Dendritic cell treated with granulocyte-macrophage colony-stimulating factor and Interleukin-4, amounts not matched to agents 40 ng/mL and 50 ng/mL, for 4 days (primary cell): ENCODE measurements at regions of chr6 and their contacts with region 1.

Region 1: GRCh38 chr6:14210663-14211561 is 93.3 kb downstream of the CD83 start:
- H3K4me3 Mint-ChIP-seq: peak overlapping the region; percentile 77
- H3K27ac Mint-ChIP-seq: peak overlapping the region; percentile 81
- H3K4me1 Mint-ChIP-seq: peaks cover 38% of the 10 kb centered on the region
- H3K27me3 Mint-ChIP-seq: peaks cover 15% of the 10 kb centered on the region

Region 2: DNA sequence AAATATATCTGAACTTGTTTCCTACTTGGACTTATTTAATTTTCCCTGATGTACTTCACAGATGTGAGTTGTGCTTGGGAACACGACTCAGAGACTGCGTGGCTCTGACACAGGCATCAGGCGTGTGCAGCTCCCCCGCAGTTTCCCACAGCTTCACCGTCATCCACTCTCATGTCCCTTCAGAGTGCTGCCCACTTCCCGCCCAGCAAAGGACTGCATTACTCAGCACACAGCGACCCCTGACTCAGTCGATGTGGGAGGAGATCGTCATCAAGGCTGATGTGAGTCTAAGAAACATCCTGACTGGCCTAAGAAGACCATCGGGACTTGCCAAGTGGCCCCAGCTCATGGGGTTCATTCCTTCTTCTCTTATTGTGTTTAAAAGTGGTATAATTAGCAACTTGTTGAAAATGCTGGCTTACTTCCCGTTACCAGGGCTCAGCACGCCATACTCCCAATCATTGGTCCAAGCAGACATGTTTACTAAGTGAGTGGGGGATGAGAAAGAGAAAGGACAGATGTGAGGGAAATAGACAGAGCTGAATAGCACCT is 495.5 kb after region 1 on chr6:
- intact Hi-C with region 1: loop called (anchors 5 kb)
- H3K4me3 Mint-ChIP-seq: no peak overlapping the region
- H3K27ac Mint-ChIP-seq: no peak overlapping the region
- H3K4me1 Mint-ChIP-seq: peaks cover 69% of the 10 kb centered on the region
- H3K27me3 Mint-ChIP-seq: no peaks in the 10 kb centered on the region

Region 3: GRCh38 chr6:14936861-14937260 is 725.9 kb after region 1 on chr6:
- intact Hi-C with region 1: loop called (anchors 5 kb)
- H3K4me3 Mint-ChIP-seq: no peak overlapping the region
- H3K27ac Mint-ChIP-seq: no peak overlapping the region
- H3K4me1 Mint-ChIP-seq: peaks cover 44% of the 10 kb centered on the region
- H3K27me3 Mint-ChIP-seq: peaks cover 3% of the 10 kb centered on the region

Region 4: GRCh38 chr6:15245361-15246216 is 1034.7 kb after region 1 on chr6 and contains the start of gene JARID2:
- intact Hi-C with region 1: loop called (anchors 5 kb)
- H3K4me3 Mint-ChIP-seq: peak within 1 kb of the TSS; percentile 85
- H3K27ac Mint-ChIP-seq: peak within 1 kb of the TSS; percentile 92
- H3K4me1 Mint-ChIP-seq: peaks cover 26% of the 10 kb centered on the region
- H3K27me3 Mint-ChIP-seq: no peaks in the 10 kb centered on the region

Region 5: GRCh38 chr6:15628499-15629131 is 1417.7 kb after region 1 on chr6:
- intact Hi-C with region 1: loop called (anchors 5 kb)
- H3K4me3 Mint-ChIP-seq: no peak overlapping the region
- H3K27ac Mint-ChIP-seq: peak overlapping the region; percentile 27
- H3K4me1 Mint-ChIP-seq: peaks cover 12% of the 10 kb centered on the region
- H3K27me3 Mint-ChIP-seq: no peaks in the 10 kb centered on the region